ENCODE measurements at regions of chr11 and their contacts with region 1.

Region 1: GRCh38 chr11:67439321-67439883 is 1.9 kb upstream of the PTPRCAP start:
- DNase-seq: peak; percentile 61
- ATAC-seq: no peak
- H3K4me3 Mint-ChIP-seq: peak overlapping the region; percentile 98
- H3K27ac Mint-ChIP-seq: peak overlapping the region; percentile 96
- H3K4me1 Mint-ChIP-seq: peaks cover 32% of the 10 kb centered on the region
- H3K27me3 Mint-ChIP-seq: no peaks in the 10 kb centered on the region

Region 2: DNA sequence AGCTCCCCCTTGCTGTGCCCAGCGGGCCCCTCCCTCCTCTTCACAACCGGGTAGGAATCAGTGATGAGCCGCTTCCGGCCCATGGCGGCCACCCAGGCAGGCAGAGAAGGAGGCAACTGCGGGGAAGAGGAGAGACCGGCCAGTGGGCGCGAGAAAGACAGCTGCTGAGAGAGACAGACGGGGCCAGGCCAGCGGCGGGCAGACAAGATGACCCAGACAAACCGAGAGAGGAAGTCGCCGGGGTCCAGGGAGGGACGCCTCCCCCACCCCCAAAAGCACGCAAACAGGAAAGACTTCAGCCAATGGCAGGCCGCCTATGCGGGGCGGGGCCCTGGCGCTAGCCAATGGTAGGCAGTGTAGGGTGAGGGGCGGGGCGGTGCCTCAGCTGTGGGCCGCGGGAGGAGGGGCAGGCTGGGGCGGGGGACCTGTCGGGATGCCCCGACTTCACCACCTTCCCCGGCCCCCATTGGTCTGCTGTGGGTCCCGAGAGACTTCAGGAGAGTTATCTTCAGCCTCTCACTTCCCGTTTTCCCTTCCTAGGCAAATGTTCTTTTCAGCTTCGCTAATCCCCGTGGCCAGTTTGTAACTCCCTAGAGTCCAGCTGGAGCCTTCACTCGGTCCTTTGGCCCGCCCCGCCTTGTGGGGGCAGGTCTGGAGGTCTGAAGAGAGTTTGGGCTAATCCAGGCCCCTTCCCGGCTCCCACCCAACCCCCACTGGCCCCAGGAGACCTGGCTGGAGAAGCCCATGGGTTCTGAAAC is 85.9 kb before region 1 on chr11 and contains the start of gene POLD4:
- POLR2A ChIA-PET with region 1: interaction called, 32 read pairs
- DNase-seq: peak; percentile 95
- ATAC-seq: peak; percentile 87
- H3K4me3 Mint-ChIP-seq: peak within 1 kb of the TSS; percentile 98
- H3K27ac Mint-ChIP-seq: peak within 1 kb of the TSS; percentile 100
- H3K4me1 Mint-ChIP-seq: peaks cover 29% of the 10 kb centered on the region
- H3K27me3 Mint-ChIP-seq: no peaks in the 10 kb centered on the region
- total RNA-seq, gene POLD4: 73.2 to 78.2 TPM

Region 3: DNA sequence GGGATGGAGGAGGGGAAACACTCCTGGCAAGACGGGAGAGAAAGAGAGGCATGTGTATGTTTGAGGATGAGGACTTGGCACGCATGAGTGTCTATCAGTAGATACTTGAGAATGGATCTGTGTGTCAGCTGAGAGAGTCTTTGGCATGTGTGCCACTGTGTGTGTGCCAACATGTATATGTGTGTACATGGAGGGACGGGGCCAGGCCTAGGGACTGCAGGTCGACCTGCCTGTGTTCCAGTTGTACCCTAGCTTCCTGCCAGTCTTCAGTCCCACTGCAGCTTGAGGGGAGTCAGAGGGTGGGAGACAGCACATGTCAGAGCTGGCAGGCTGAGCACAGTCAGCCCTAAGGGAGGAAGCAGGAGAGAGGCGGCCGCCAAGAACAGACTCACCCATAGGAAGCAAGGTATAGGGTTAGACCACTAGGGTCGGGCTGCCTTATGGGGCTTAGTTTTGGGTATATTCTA is 71.6 kb before region 1 on chr11:
- POLR2A ChIA-PET with region 1: no interaction called
- DNase-seq: no peak
- ATAC-seq: no peak
- H3K4me3 Mint-ChIP-seq: no peak overlapping the region
- H3K27ac Mint-ChIP-seq: no peak overlapping the region
- H3K4me1 Mint-ChIP-seq: peaks cover 48% of the 10 kb centered on the region
- H3K27me3 Mint-ChIP-seq: peaks cover 42% of the 10 kb centered on the region

Region 4: GRCh38 chr11:67409261-67409666 is 30.1 kb before region 1 on chr11:
- POLR2A ChIA-PET with region 1: interaction called, 491 read pairs
- DNase-seq: peak; percentile 86
- ATAC-seq: peak; percentile 69
- H3K4me3 Mint-ChIP-seq: peak overlapping the region; percentile 98
- H3K27ac Mint-ChIP-seq: peak overlapping the region; percentile 95
- H3K4me1 Mint-ChIP-seq: peaks cover 67% of the 10 kb centered on the region
- H3K27me3 Mint-ChIP-seq: no peaks in the 10 kb centered on the region

Region 5: DNA sequence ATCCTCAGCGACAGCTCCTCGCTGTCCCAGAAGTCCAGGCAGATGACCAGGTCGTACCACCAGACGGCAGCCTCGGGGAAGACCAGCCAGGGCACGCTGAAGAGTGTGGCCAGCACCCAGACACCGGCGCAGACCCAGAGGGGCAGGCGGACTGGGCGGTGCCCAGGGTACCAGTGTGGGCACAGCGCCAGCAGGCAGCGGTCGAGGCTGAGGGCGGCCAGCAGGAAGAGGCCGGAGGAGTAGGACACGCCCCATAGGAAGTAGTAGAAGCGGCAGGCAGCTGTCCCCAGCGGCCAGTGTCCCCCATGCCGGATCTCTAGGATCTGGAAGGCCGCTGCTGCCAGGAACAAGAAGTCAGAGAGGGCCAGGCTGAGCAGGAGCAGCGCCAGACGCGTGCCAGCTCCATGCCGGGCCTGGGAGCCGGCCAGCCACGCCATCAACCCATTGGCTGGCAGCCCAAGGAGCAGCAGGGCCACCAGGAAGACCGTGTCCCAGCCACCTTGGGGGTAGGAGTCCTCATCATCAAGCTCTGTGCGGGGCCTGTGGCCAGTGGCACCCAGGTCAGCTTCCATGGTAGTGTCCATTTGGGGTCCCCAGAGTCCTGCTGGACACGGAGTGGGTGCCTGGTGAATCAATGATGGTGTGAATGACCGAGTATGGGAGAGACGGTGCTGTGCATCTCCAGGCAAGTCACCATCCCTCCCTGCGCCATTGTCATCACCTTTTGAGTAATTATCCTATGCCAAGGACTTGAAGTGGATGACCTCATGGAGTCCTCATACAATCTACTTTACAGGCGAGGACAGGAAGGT is 12.9 kb after region 1 on chr11 and contains the start of gene GPR152:
- POLR2A ChIA-PET with region 1: interaction called, 23 read pairs
- DNase-seq: no peak
- ATAC-seq: no peak
- H3K4me3 Mint-ChIP-seq: no peak within 1 kb of the TSS
- H3K27ac Mint-ChIP-seq: no peak within 1 kb of the TSS
- H3K4me1 Mint-ChIP-seq: peaks cover 7% of the 10 kb centered on the region
- H3K27me3 Mint-ChIP-seq: peaks cover 5% of the 10 kb centered on the region
- total RNA-seq, gene GPR152: not detected

Region 6: GRCh38 chr11:67482825-67483798 is 43.7 kb after region 1 on chr11 and contains the start of gene AIP:
- POLR2A ChIA-PET with region 1: interaction called, 94 read pairs
- DNase-seq: peak; percentile 94
- ATAC-seq: peak; percentile 81
- H3K4me3 Mint-ChIP-seq: peak within 1 kb of the TSS; percentile 93
- H3K27ac Mint-ChIP-seq: peak within 1 kb of the TSS; percentile 100
- H3K4me1 Mint-ChIP-seq: peaks cover 47% of the 10 kb centered on the region
- H3K27me3 Mint-ChIP-seq: peaks cover under 1% of the 10 kb centered on the region
- total RNA-seq, gene AIP: 161 to 166 TPM

Region 7: GRCh38 chr11:67505605-67506396 is 66.4 kb after region 1 on chr11:
- POLR2A ChIA-PET with region 1: interaction called, 39 read pairs
- DNase-seq: peak; percentile 94
- ATAC-seq: peak; percentile 40
- H3K4me3 Mint-ChIP-seq: peak overlapping the region; percentile 93
- H3K27ac Mint-ChIP-seq: peak overlapping the region; percentile 94
- H3K4me1 Mint-ChIP-seq: peaks cover 37% of the 10 kb centered on the region
- H3K27me3 Mint-ChIP-seq: peaks cover 5% of the 10 kb centered on the region